IMR-90 (cell line): ENCODE measurements at regions of chr17 and their contacts with region 1.

Region 1: GRCh38 chr17:80981062-80981902 is 10.4 kb upstream of the CHMP6 start:
- DNase-seq: no peak
- ATAC-seq: peak; percentile 35
- H3K4me3 ChIP-seq: no peak overlapping the region
- H3K27ac ChIP-seq: no peak overlapping the region
- H3K4me1 ChIP-seq: peaks cover 7% of the 10 kb centered on the region
- H3K27me3 ChIP-seq: no peaks in the 10 kb centered on the region
- CTCF ChIP-seq: peak; percentile 78
- POLR2A ChIP-seq: no peak
- RAD21 ChIP-seq: peak; percentile 83

Region 2: DNA sequence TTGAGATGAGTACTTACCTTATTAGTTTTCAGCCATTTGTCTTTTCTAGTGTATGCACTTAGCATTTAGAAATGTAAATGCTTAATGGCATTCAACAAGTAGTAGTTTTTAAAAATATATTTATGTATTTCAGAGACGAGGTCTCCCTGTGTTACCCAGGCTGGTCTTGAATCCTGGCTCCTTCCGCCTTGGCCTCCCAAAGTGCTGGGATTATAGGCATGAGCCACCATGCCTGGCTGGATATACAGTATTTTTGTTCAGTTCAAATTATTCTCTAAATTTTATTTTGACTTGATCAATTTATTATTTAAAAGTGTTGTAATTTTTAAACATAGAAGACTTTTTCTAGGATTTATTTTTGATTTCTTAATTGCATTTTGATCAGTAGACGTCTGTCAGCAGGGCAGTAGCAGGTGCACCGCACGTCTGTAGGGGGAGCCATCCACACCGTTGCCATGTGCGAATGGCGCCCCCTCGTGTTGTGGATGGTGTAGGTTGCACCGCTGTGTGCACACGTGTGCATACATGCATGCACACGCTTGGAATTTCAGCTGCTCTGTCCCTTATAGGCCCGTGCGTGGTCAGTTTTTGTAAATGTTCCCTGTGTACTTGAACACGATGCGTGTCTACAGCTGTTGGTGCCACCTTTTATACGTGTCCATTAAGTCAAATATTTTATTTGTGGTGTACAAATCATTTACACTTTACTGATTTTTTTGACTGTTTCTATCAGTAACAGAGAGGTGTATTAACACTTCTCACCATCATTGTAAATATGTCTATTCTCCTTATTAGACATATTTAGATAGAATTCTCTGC is 406.0 kb before region 1 on chr17:
- CTCF ChIA-PET with region 1: no interaction called
- POLR2A ChIA-PET with region 1: no interaction called
- dilution Hi-C with region 1: no loop called
- in situ Hi-C with region 1: loop called (anchors 5 kb)
- intact Hi-C with region 1: loop called (anchors 5 kb)
- DNase-seq: peak; percentile 89
- ATAC-seq: peak; percentile 98
- H3K4me3 ChIP-seq: no peak overlapping the region
- H3K27ac ChIP-seq: no peak overlapping the region
- H3K4me1 ChIP-seq: peaks cover 5% of the 10 kb centered on the region; the same call in 1 of the 2 replicates
- H3K27me3 ChIP-seq: no peaks in the 10 kb centered on the region
- CTCF ChIP-seq: peak; percentile 100; the same call in 1 of the 2 replicates
- POLR2A ChIP-seq: peak; percentile 69; the same call in 1 of the 2 replicates
- RAD21 ChIP-seq: peak; percentile 100

Region 3: DNA sequence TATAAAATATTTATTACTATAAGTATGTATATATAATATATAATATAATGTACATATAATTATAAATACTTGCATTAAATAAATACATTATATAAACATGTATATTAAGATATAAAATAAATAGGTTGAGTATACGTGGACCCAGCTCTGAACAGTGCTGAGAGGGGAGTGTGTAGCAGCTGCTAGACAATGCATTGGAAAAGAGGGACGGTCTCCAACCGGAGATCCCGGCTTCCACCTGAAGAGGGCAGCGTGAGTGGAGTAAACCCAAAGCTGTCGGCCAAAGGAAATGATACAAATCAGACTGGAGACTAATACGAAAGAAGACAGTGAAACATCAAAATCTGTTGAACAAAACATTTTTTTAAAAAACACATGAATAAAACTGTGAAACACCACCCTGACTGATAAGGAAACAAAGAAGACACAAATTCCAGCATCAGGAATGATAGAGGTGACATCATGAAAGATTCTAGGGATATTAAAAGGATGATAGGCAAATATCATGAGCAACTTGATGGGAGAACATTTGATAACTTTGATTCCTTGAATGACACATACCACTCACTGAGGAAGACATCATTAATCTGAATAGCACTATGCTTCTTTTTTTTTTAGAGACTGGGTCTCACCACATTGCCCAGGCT is 115.0 kb before region 1 on chr17:
- CTCF ChIA-PET with region 1: no interaction called
- POLR2A ChIA-PET with region 1: no interaction called
- dilution Hi-C with region 1: no loop called
- in situ Hi-C with region 1: no loop called
- intact Hi-C with region 1: loop called (anchors 5 kb)
- DNase-seq: peak; percentile 69
- ATAC-seq: peak; percentile 93
- H3K4me3 ChIP-seq: no peak overlapping the region
- H3K27ac ChIP-seq: no peak overlapping the region
- H3K4me1 ChIP-seq: peaks cover 1% of the 10 kb centered on the region
- H3K27me3 ChIP-seq: no peaks in the 10 kb centered on the region
- CTCF ChIP-seq: peak; percentile 75
- POLR2A ChIP-seq: no peak
- RAD21 ChIP-seq: peak; percentile 68